MCF 10A (cell line): ENCODE measurements at regions of chr20 and their contacts with region 1.

Region 1: GRCh38 chr20:17569616-17570346 is at the start of gene DSTN:
- DNase-seq: peak; percentile 94
- H3K4me3 Mint-ChIP-seq: peak within 1 kb of the TSS; percentile 94
- H3K27ac Mint-ChIP-seq: peak within 1 kb of the TSS; percentile 99
- H3K4me1 Mint-ChIP-seq: peaks cover 37% of the 10 kb centered on the region
- H3K27me3 Mint-ChIP-seq: no peaks in the 10 kb centered on the region
- CTCF ChIP-seq: no peak
- total RNA-seq, gene DSTN: 217 and 280 TPM in 2 replicates

Region 2: GRCh38 chr20:17485017-17485416 is 84.8 kb before region 1 on chr20:
- CTCF ChIA-PET with region 1: no interaction called
- POLR2A ChIA-PET with region 1: no interaction called
- intact Hi-C with region 1: no loop called
- DNase-seq: no peak
- H3K4me3 Mint-ChIP-seq: no peak overlapping the region
- H3K27ac Mint-ChIP-seq: no peak overlapping the region
- H3K4me1 Mint-ChIP-seq: no peaks in the 10 kb centered on the region
- H3K27me3 Mint-ChIP-seq: peaks cover 36% of the 10 kb centered on the region
- CTCF ChIP-seq: no peak

Region 3: DNA sequence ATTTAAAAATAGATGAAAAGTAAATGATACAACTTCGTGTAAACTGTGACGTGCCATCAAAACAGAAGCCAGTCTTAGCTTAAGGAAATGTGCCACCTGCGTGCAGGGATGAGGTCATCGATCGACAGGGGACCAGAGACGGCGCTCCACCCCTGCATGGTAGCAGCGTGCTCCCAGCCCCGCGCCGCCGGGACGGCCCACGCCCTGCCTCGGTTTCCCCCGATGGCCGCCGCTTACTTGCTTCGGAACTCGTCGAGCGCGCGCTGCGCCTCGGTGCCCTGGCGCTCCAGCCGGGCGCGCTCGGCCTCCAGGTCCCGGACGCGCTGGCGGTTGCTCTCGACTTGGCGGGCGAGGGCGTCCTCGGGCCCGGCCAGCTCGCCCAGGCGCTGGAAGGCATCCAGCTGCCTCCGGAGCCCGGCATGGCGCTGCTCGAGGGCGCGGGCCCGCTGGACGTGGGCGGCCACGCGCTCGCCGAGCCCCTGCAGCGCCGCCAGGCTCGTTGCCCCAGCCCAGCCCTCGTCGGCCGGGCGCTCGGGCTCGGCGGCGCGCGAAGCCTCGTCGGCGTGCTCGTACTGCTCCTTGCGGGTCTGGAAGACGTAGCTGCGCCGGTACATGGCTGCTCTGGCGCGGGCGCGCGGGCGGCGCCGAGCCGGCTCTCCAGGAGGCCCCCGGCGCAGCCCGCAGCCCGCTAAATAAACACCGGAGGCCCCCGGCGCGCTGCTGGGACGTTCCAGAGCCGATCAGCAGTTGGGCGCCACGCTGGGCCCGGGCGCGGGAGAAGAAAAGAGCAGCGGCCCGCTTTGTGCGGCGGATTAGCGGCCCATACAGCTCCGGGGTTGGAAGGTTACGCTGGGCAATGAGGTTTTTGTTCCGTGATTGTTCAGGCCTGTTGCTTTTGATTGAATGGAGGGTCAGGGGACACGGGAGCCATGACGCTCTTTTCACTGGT is 38.8 kb before region 1 on chr20 and contains the start of gene BFSP1:
- CTCF ChIA-PET with region 1: interaction called, 34 read pairs
- POLR2A ChIA-PET with region 1: interaction called, 55 read pairs
- intact Hi-C with region 1: no loop called
- DNase-seq: peak; percentile 38
- H3K4me3 Mint-ChIP-seq: peak within 1 kb of the TSS; percentile 69
- H3K27ac Mint-ChIP-seq: no peak within 1 kb of the TSS
- H3K4me1 Mint-ChIP-seq: no peaks in the 10 kb centered on the region
- H3K27me3 Mint-ChIP-seq: no peaks in the 10 kb centered on the region
- CTCF ChIP-seq: no peak
- total RNA-seq, gene BFSP1: 3.5 and 3.9 TPM in 2 replicates

Region 4: DNA sequence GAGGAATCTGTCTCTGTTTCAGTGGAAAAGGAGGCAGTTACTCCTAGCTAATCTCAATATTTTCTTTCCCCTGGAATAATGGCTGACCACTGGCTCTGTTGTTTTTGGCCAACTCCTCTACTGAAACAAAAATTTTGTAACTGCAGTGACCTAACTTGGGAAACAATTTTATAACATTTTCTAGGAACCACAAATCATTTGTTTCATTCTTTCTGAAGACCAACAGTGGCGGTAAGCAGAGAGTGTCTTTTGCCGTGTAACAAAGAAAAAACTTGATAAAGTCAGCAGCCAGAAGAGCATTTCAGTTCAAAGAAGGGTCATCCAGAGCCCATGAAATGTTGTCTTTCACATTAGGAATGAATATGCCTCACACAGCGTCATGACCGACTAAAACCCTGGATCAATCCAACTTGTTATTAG is 26.8 kb before region 1 on chr20:
- CTCF ChIA-PET with region 1: interaction called, 75 read pairs
- POLR2A ChIA-PET with region 1: interaction called, 348 read pairs
- intact Hi-C with region 1: loop called (anchors 1 kb)
- DNase-seq: peak; percentile 71
- H3K4me3 Mint-ChIP-seq: no peak overlapping the region
- H3K27ac Mint-ChIP-seq: no peak overlapping the region
- H3K4me1 Mint-ChIP-seq: peaks cover 27% of the 10 kb centered on the region
- H3K27me3 Mint-ChIP-seq: no peaks in the 10 kb centered on the region
- CTCF ChIP-seq: no peak

Region 5: GRCh38 chr20:17558154-17558940 is 11.4 kb before region 1 on chr20:
- CTCF ChIA-PET with region 1: interaction called, 72 read pairs
- POLR2A ChIA-PET with region 1: interaction called, 340 read pairs
- intact Hi-C with region 1: loop called (anchors 1 kb)
- DNase-seq: peak; percentile 89
- H3K4me3 Mint-ChIP-seq: peak overlapping the region; percentile 64
- H3K27ac Mint-ChIP-seq: peak overlapping the region; percentile 97
- H3K4me1 Mint-ChIP-seq: peaks cover 36% of the 10 kb centered on the region
- H3K27me3 Mint-ChIP-seq: no peaks in the 10 kb centered on the region
- CTCF ChIP-seq: no peak

Region 6: DNA sequence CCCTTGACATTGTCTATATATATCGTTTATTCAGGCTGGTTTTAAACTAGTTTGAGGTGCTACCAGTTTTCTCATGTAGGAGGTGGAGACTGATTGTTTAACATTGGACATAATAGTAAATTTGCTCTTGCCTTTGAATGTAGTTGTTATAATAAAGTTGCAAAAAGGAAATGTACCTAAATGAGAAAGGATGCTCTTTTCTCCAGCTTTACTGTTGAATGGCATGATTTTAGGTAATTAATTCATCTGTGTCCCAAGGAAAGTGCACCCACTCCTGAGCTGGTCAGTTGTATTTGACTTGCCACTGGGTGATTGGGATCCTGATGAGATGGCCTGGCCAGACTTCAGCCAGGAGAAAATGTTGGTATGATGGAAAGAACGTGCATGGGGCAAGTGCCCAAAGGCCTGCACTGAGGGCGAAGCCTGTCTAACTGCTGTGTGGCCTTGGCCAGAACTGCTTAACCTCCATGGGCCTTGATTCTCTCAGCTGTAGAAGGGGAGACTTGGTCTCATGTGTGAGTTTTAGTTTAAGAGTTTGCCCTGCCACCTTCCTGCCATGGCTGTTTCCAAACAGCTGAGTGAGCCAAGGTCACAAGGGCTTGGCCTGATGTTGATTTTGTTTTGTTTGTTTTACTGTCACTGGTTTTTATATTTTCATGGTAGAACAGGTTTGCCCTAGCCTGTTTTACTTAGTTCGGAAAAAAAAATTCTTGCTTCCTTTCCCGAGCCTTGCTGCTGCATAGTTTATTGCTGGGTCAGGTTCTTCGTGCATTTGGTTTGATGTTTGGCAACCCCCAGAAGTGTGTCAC is 35.3 kb after region 1 on chr20:
- CTCF ChIA-PET with region 1: interaction called, 7 read pairs
- POLR2A ChIA-PET with region 1: interaction called, 42 read pairs
- intact Hi-C with region 1: loop called (anchors 5 kb)
- DNase-seq: no peak
- H3K4me3 Mint-ChIP-seq: no peak overlapping the region
- H3K27ac Mint-ChIP-seq: no peak overlapping the region
- H3K4me1 Mint-ChIP-seq: no peaks in the 10 kb centered on the region
- H3K27me3 Mint-ChIP-seq: no peaks in the 10 kb centered on the region
- CTCF ChIP-seq: no peak

Region 7: DNA sequence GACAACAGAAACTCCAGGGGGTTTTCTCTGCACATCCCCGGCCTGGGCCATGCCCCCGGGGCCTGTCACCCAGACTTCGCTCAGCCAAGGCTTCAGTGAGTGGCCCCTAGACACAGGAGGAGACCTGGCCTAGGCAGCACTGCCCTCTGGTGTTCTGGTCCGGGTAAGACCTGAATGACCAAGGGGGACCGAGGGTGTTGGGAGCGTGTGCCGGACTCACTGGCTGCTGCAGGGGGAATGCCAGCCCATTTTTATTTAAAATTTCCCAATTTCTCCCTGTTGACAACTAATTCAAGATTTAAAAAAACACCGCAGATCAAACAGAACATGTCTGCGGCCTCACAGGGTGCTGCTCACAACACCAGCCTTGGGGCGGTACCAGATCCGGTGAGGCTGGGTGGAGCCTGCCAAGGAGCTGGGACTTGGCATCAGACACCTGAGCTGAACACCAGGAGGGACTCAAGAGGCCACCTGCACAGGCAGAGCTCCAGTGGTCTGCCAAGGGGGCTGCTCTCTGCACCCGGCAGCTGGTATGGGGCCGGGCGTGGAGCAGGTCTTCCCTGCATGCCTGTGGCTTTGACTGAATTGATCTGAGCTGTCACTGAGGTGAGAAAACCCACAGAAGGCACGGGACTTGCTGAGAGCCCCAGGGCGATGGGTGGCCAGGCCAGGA is 47.9 kb after region 1 on chr20:
- CTCF ChIA-PET with region 1: interaction called, 15 read pairs
- POLR2A ChIA-PET with region 1: interaction called, 5 read pairs
- intact Hi-C with region 1: loop called (anchors 5 kb)
- DNase-seq: peak; percentile 51
- H3K4me3 Mint-ChIP-seq: no peak overlapping the region
- H3K27ac Mint-ChIP-seq: no peak overlapping the region
- H3K4me1 Mint-ChIP-seq: peaks cover under 1% of the 10 kb centered on the region
- H3K27me3 Mint-ChIP-seq: no peaks in the 10 kb centered on the region
- CTCF ChIP-seq: peak; percentile 66

Region 8: DNA sequence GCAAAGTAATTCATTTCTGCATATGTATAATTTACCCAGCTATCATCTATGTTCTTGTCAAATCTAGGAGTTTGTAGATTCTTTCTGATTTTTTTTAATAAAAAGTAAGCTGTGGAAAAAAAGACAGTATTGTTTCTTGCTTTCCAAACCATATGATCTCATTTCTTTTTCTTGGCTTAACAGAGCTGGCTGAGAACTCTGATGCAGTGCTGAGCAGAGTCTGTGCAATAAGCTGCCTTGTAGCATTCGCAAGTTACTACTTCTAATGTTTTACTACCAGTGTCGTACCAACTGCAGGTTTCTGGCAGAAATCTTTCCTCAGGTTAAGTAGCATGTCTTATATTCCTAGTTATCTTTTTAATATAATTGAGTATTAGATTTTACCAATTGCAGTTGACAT is 96.7 kb after region 1 on chr20:
- CTCF ChIA-PET with region 1: no interaction called
- POLR2A ChIA-PET with region 1: no interaction called
- intact Hi-C with region 1: no loop called
- DNase-seq: no peak
- H3K4me3 Mint-ChIP-seq: no peak overlapping the region
- H3K27ac Mint-ChIP-seq: no peak overlapping the region
- H3K4me1 Mint-ChIP-seq: peaks cover 29% of the 10 kb centered on the region
- H3K27me3 Mint-ChIP-seq: no peaks in the 10 kb centered on the region
- CTCF ChIP-seq: no peak

Region 9: GRCh38 chr20:17958373-17959256 is 388.8 kb after region 1 on chr20:
- CTCF ChIA-PET with region 1: interaction called, 3 read pairs
- POLR2A ChIA-PET with region 1: interaction called, 167 read pairs
- intact Hi-C with region 1: no loop called
- DNase-seq: no peak
- H3K4me3 Mint-ChIP-seq: no peak overlapping the region
- H3K27ac Mint-ChIP-seq: peak overlapping the region; percentile 82
- H3K4me1 Mint-ChIP-seq: peaks cover 33% of the 10 kb centered on the region
- H3K27me3 Mint-ChIP-seq: no peaks in the 10 kb centered on the region
- CTCF ChIP-seq: no peak